ENCODE measurements at regions of chr20 and their contacts with region 1.

Region 1: GRCh38 chr20:3927486-3928291 is 38.5 kb downstream of the PANK2 start:
- H3K4me3 Mint-ChIP-seq: no peak overlapping the region
- H3K27ac Mint-ChIP-seq: peak overlapping the region; percentile 75
- H3K4me1 Mint-ChIP-seq: peaks cover 90% of the 10 kb centered on the region
- H3K27me3 Mint-ChIP-seq: no peaks in the 10 kb centered on the region

Region 2: GRCh38 chr20:3888622-3889488 is 38.8 kb before region 1 on chr20 and contains the start of gene PANK2:
- intact Hi-C with region 1: loop called (anchors 5 kb)
- H3K4me3 Mint-ChIP-seq: peak within 1 kb of the TSS; percentile 96
- H3K27ac Mint-ChIP-seq: peak within 1 kb of the TSS; percentile 93
- H3K4me1 Mint-ChIP-seq: peaks cover 31% of the 10 kb centered on the region
- H3K27me3 Mint-ChIP-seq: no peaks in the 10 kb centered on the region

Region 3: DNA sequence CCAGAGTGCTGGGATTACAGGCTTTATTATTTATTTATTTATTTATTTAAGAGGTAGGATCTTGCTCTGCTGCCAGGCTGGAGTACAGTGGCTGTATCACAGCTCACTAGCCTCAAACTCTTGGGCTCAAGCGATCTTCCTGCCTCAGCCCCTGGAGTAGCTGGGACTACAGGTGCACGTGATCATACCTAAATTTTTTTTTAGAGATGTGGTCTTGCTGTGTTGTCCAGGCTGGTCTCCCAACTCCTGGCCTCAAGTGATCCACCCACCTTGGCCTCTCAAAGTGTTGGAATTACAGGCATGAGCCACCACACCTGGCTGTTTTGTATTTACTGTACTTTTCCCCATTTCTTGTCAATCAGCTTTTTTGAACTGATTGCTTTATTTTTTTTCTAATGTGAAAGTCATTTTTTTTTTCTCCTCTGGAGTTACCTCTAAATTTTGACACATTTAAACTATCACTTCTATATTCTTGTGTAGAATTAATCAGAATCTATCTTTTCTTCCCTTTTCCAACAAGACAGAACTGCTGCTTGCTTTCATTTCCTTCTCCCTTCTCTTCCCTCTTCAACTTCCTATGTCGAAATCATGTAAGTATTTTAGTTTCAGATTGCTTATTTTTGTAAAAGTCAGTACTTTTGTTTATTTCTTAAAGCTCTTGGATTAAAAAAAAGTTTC is 26.5 kb before region 1 on chr20:
- intact Hi-C with region 1: loop called (anchors 2 kb)
- H3K4me3 Mint-ChIP-seq: peak overlapping the region; percentile 79
- H3K27ac Mint-ChIP-seq: peak overlapping the region; percentile 82
- H3K4me1 Mint-ChIP-seq: peaks cover 80% of the 10 kb centered on the region
- H3K27me3 Mint-ChIP-seq: no peaks in the 10 kb centered on the region

Region 4: GRCh38 chr20:3908667-3909066 is 19.0 kb before region 1 on chr20:
- intact Hi-C with region 1: loop called (anchors 2 kb)
- H3K4me3 Mint-ChIP-seq: no peak overlapping the region
- H3K27ac Mint-ChIP-seq: peak overlapping the region; percentile 10
- H3K4me1 Mint-ChIP-seq: peaks cover 53% of the 10 kb centered on the region
- H3K27me3 Mint-ChIP-seq: no peaks in the 10 kb centered on the region

Region 5: DNA sequence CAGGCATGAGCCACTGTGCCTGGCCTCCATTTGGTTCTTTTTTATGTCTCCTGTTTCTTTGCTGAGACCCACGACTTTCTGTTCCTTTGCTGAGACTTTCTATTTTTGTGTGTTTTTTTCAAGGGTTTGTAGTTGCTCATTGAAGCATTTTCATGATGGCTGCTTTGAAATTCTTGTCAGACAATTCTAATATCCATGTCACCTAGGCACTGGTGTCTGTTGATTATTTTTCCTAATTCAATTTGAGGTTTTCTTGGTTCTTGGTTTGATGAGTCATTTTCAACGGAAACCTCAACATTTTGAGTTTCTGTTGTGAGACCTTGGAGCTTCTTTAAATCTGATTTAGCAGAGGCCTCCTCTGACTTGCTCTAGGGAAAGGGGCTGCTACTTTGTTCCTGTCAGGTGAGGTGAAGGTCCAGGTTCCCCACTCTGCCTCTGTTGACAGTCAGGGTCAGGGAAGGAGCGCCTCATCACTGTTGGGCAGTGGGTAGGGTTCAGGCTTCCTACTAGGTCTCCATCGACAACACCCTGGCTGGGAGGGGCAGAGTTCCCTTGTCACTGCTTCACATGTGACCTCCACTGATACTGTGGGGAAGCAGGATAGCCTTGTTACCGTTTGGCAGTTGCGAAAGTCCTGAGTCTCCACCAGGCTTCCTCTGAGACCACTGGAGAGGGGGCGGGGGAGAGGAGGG is 154.9 kb after region 1 on chr20:
- intact Hi-C with region 1: loop called (anchors 5 kb)
- H3K4me3 Mint-ChIP-seq: peak overlapping the region; percentile 65
- H3K27ac Mint-ChIP-seq: peak overlapping the region; percentile 100
- H3K4me1 Mint-ChIP-seq: peaks cover 68% of the 10 kb centered on the region
- H3K27me3 Mint-ChIP-seq: no peaks in the 10 kb centered on the region

Measured in dendritic cell treated with granulocyte-macrophage colony-stimulating factor and Interleukin-4, amounts not matched to agents 40 ng/mL and 50 ng/mL, for 4 days (primary cell).